ENCODE measurements at regions of chr2 and their contacts with region 1.

Region 1: DNA sequence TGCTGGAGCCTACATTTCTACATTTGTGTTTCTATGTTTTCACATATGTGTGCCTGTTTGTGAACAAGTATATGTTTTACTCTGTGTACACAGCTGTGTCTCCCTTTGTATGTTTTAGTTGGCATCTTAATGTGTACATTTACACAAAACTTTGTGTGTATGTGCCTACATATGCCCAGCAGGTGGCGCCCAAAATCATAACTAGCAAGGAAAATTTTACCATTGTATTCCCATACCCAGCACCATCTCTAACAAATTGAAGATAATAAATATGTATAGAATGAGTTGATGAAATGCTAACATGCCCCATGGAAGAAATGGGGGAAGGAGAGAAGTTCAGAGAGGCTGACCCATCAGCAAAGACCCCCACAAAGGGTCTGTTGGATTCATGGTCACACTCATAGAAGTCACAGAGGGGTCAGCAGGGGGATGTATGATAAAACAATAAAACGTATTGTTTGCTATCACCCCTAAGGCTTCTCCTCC is 48.1 kb downstream of the PKDCC start:
- DNase-seq: peak; percentile 78
- H3K4me3 ChIP-seq: no peak overlapping the region
- H3K27ac ChIP-seq: peak overlapping the region in 1 of 2 experiments; percentile 24; a peak in 2 of 4 replicates
- H3K4me1 ChIP-seq: peaks cover 0 to 15% of the 10 kb centered on the region in 2 experiments; a peak in 1 of 4 replicates
- H3K27me3 ChIP-seq: no peaks in the 10 kb centered on the region
- CTCF ChIP-seq: peak; percentile 98
- EP300 ChIP-seq: no peak; a peak in 1 of 4 replicates
- RAD21 ChIP-seq: peak; percentile 100

Region 2: DNA sequence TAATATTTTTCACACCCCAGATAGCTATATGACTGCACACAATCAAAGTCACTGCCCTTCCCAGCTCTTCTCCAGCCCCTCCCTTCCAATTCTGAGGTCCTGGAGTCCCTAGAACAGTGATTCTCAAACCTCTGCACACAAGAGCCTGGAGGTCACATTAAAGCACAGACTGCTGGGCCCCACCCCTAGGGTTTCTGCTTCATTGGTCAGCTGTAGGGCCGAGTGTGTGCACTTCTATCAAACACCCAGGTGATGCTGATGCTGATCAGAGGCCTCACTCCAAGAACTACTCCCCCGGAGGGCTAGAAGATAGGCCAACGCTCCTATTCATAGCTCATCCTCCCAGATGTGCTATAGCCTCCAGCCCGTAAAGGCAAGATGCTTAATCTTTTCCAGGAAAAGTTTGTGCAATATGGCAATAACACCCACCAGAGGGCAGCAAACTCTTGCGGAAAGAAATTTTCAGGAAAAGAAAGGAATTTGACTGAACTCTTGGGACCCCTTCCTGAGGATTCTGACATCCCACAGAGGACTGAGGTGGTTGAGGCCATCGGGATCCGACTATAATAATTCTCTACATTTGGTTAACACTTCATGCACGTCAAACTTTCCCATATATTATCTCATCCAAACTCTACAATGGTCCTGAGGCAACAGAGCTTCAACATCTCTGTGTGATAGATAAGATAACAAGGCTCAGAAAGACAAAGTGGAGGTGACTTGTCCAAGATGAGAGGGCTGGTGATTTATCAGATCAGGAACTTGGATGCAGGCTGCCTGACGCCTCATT is 242.3 kb before region 1 on chr2:
- CTCF ChIA-PET with region 1: interaction called, 58 read pairs
- POLR2A ChIA-PET with region 1: no interaction called
- DNase-seq: peak; percentile 71
- H3K4me3 ChIP-seq: no peak overlapping the region
- H3K27ac ChIP-seq: no peak overlapping the region
- H3K4me1 ChIP-seq: peaks cover 0 to 7% of the 10 kb centered on the region in 2 experiments; a peak in 1 of 4 replicates
- H3K27me3 ChIP-seq: no peaks in the 10 kb centered on the region; the same call in 1 of the 2 replicates
- CTCF ChIP-seq: peak; percentile 91
- EP300 ChIP-seq: 0 out of 4 replicates have a peak, but pooled peaks of 1 of the 2 experiments have one; percentile 13
- RAD21 ChIP-seq: peak; percentile 99

Region 3: GRCh38 chr2:42132966-42133641 is 37.1 kb after region 1 on chr2:
- CTCF ChIA-PET with region 1: interaction called, 7 read pairs
- POLR2A ChIA-PET with region 1: interaction called, 11 read pairs
- DNase-seq: peak; percentile 85
- H3K4me3 ChIP-seq: peak overlapping the region; percentile 36 to 46
- H3K27ac ChIP-seq: peak overlapping the region; percentile 87 to 100
- H3K4me1 ChIP-seq: peaks cover 51 to 65% of the 10 kb centered on the region in 2 experiments
- H3K27me3 ChIP-seq: no peaks in the 10 kb centered on the region
- CTCF ChIP-seq: no peak
- EP300 ChIP-seq: peak; percentile 97 to 98
- RAD21 ChIP-seq: peak; percentile 57; the same call in 1 of the 2 replicates

Region 4: GRCh38 chr2:42205337-42205736 is 109.4 kb after region 1 on chr2:
- CTCF ChIA-PET with region 1: interaction called, 14 read pairs
- POLR2A ChIA-PET with region 1: interaction called, 3 read pairs
- DNase-seq: no peak
- H3K4me3 ChIP-seq: no peak overlapping the region
- H3K27ac ChIP-seq: no peak overlapping the region
- H3K4me1 ChIP-seq: peaks cover 0 to 17% of the 10 kb centered on the region in 2 experiments; a peak in 2 of 4 replicates
- H3K27me3 ChIP-seq: no peaks in the 10 kb centered on the region
- CTCF ChIP-seq: no peak
- EP300 ChIP-seq: no peak
- RAD21 ChIP-seq: no peak

Region 5: DNA sequence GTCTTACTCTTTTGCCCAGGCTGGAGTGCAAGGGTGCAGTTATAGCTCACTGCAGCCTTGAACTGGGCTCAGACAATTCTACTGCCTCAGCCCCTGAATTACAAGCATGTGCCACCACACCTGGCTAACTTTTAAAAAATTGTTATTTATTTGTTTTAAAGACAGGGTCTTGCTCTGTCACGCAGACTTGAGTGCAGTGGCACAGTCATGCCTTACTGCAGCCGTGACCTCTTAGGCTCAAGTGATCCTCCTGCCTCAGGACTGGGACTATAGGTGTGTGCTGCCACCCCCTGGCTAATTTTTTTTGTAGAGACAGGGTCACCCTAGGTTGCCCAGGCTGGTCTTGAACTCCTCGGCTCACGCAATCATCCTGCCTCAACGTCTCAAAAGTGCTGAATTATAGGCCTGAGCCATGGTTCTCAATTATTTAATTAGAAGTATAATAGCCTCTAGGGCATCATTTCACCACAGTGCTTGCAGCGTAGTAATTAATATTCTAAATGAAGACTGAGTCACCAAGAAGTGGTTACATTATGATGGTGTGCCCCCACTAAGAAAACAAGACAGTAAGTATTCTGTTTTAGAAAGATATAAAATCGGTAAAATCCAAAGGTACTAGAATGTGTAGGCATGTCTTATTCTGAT is 142.8 kb after region 1 on chr2:
- CTCF ChIA-PET with region 1: interaction called, 46 read pairs
- POLR2A ChIA-PET with region 1: no interaction called
- DNase-seq: no peak
- H3K4me3 ChIP-seq: no peak overlapping the region
- H3K27ac ChIP-seq: peak overlapping the region in 1 of 2 experiments; percentile 11; a peak in 1 of 4 replicates
- H3K4me1 ChIP-seq: peaks cover 2 to 19% of the 10 kb centered on the region in 2 experiments; a peak in 3 of 4 replicates
- H3K27me3 ChIP-seq: no peaks in the 10 kb centered on the region
- CTCF ChIP-seq: peak; percentile 60
- EP300 ChIP-seq: no peak
- RAD21 ChIP-seq: peak; percentile 75

Measured in SK-N-SH (cell line).